Activated CD8-positive, alpha-beta memory T cell treated with anti-CD3 and anti-CD28 coated beads, Interleukin-2, amount 10 ng/mL, durations not matched to agents 7 days and 5 days (primary cell): ENCODE measurements at regions of chr16 and their contacts with region 1.

Region 1: DNA sequence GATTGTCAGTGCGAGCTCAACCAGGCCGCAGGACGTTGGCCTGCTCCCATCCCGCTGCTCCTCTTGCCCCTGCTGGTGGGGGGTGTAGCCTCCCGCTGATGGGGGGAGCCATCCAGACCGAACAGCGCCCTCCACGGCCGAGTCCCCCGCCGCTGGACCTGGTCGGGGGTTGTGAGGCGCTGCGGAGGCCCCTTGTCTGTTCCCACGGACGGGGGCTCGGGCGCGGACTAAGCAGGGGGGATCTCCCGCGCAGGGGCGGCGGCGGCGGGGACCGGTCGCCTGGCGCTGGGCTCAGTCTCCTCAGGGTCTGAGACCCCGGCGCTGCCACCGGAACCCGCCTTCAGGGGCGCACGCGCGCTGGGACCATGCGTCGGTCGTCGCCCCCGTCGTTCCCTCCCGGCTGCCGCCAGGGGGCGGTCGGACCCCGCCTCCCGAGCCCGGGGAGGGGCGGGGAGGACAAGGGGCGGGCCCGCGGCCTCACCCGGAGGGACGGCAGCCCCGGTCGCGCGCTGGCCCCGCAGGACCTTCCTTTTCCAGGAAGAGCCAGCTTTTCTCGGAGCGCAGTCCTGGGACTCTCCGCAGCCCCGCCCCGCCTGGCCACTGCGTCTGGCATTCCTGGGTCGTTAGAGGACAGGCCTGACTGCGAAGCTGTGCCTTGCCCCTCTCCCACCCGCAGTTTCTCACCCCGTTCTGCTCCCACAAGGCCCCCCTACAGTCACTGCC is 6.3 kb upstream of the IL32 start:
- DNase-seq: peak; percentile 92
- ATAC-seq: peak; percentile 76
- H3K4me3 Mint-ChIP-seq: peak overlapping the region; percentile 81
- H3K27ac Mint-ChIP-seq: peak overlapping the region; percentile 90
- H3K4me1 Mint-ChIP-seq: peaks cover 71% of the 10 kb centered on the region
- H3K27me3 Mint-ChIP-seq: no peaks in the 10 kb centered on the region

Region 2: GRCh38 chr16:3029537-3030402 is 29.4 kb before region 1 on chr16:
- CTCF ChIA-PET with region 1: interaction called, 52 read pairs
- DNase-seq: peak; percentile 81
- ATAC-seq: peak; percentile 66
- H3K4me3 Mint-ChIP-seq: peak overlapping the region; percentile 65
- H3K27ac Mint-ChIP-seq: peak overlapping the region; percentile 62
- H3K4me1 Mint-ChIP-seq: peaks cover 44% of the 10 kb centered on the region
- H3K27me3 Mint-ChIP-seq: peaks cover 51% of the 10 kb centered on the region

Region 3: GRCh38 chr16:3045357-3045728 is 13.8 kb before region 1 on chr16:
- CTCF ChIA-PET with region 1: interaction called, 61 read pairs
- DNase-seq: peak; percentile 74
- ATAC-seq: peak; percentile 41
- H3K4me3 Mint-ChIP-seq: peak overlapping the region; percentile 88
- H3K27ac Mint-ChIP-seq: peak overlapping the region; percentile 83
- H3K4me1 Mint-ChIP-seq: peaks cover 40% of the 10 kb centered on the region
- H3K27me3 Mint-ChIP-seq: peaks cover 11% of the 10 kb centered on the region

Region 4: GRCh38 chr16:3094289-3095027 is 35.3 kb after region 1 on chr16:
- CTCF ChIA-PET with region 1: interaction called, 33 read pairs
- DNase-seq: peak; percentile 73
- ATAC-seq: peak; percentile 26
- H3K4me3 Mint-ChIP-seq: no peak overlapping the region
- H3K27ac Mint-ChIP-seq: peak overlapping the region; percentile 69
- H3K4me1 Mint-ChIP-seq: peaks cover 46% of the 10 kb centered on the region
- H3K27me3 Mint-ChIP-seq: no peaks in the 10 kb centered on the region

Region 5: DNA sequence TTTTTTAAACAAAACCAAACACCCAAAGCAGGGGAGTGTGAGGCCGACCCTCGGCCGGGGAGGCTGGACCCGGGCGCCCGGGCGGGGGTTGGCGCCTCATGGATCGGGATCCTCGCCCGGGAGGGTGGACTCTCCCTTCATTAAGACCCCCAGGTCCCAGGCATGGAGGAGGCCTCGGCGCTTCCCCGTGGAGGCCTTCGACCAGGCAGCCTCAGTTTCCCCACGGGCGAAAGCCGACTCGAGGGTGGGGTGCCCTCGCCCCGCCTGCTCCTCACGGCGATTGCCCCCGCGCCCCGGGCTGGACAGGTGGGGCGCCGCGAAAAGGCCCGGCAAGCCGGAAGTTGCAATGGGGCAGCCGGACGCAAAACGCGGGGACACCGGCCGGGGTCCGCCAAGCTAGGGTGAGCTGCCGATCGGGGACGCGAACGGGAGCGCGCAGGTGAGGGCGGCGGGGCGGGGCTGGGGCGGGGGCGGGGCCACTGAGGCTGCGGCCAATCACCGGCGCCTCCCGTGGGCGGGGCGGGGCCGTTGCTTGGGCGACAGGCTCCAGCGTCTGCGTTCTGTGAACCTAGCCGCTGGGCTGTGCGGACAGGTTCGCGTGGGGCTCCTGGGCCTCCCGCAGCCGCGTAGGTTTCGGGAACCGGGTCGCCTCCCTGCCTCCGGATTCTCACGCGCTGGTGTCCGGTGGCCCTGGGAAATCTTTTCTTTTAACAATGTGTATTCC is 47.2 kb after region 1 on chr16:
- CTCF ChIA-PET with region 1: interaction called, 20 read pairs
- DNase-seq: peak; percentile 97
- ATAC-seq: peak; percentile 95
- H3K4me3 Mint-ChIP-seq: peak overlapping the region; percentile 70
- H3K27ac Mint-ChIP-seq: peak overlapping the region; percentile 91
- H3K4me1 Mint-ChIP-seq: peaks cover 18% of the 10 kb centered on the region
- H3K27me3 Mint-ChIP-seq: peaks cover 3% of the 10 kb centered on the region

Region 6: DNA sequence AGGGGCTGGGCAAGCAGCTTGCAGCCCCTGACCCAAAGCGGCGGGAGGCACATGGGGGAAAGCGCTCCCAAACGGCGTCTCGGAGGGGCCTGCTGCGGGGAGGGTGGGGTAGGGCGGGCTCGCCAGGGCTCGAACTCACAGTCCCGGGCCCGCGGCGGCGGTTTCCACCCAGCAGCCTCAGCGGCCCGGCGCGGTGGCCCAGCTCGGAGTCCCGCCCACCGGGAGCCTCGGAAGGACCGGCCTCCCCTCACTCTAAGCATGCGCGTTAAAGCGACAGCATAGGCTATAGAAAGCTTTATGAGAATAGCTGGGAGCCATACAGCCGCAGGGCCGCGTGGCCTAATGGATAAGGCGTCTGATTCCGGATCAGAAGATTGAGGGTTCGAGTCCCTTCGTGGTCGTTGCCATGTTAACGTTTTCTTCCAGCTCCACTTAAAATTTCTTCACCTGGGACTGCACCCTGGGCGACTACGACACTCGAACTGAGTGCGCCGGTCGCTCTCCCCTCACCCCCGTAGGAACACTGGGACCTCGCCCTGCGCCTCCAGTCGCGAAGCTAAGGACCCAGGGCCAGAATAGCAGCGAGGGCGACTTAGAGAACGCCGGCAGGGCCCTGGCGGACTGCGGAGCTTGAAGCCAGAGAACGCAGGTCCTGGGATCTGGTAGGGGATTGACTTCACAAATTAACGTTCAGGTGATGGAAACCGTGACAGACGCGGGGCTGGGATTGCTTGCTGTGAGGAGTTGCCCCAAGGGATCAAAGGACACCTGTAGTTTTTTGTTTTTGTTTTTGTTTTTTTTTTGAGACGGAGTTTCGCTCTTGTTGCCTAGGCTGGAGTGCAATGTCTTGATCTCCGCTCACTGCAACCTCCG is 91.4 kb after region 1 on chr16:
- CTCF ChIA-PET with region 1: interaction called, 19 read pairs
- DNase-seq: peak; percentile 99
- ATAC-seq: peak; percentile 86
- H3K4me3 Mint-ChIP-seq: peak overlapping the region; percentile 82
- H3K27ac Mint-ChIP-seq: peak overlapping the region; percentile 90
- H3K4me1 Mint-ChIP-seq: peaks cover 32% of the 10 kb centered on the region
- H3K27me3 Mint-ChIP-seq: peaks cover 21% of the 10 kb centered on the region

Region 7: GRCh38 chr16:3173892-3174617 is 114.9 kb after region 1 on chr16:
- CTCF ChIA-PET with region 1: interaction called, 10 read pairs
- DNase-seq: peak; percentile 58
- ATAC-seq: peak; percentile 13
- H3K4me3 Mint-ChIP-seq: peak overlapping the region; percentile 61
- H3K27ac Mint-ChIP-seq: no peak overlapping the region
- H3K4me1 Mint-ChIP-seq: peaks cover 38% of the 10 kb centered on the region
- H3K27me3 Mint-ChIP-seq: peaks cover 86% of the 10 kb centered on the region